Heart left ventricle (tissue), 16 donors: ENCODE measurements at regions of chr9 and their contacts with region 1.

Region 1: GRCh38 chr9:68822596-68823165 is 117.6 kb downstream of the PIP5K1B start:
- DNase-seq: peak in 4 of 5 donors; percentile 54 to 72 (median 68)
- ATAC-seq: peak; percentile 64 to 91 (median 90)
- H3K4me3 ChIP-seq: no peak overlapping the region
- H3K27ac ChIP-seq: peak overlapping the region in 9 of 12 donors; percentile 8 to 65 (median 29)
- H3K4me1 ChIP-seq: peaks cover 0 to 33% (median 11%) of the 10 kb centered on the region in 12 donors
- H3K27me3 ChIP-seq: no peaks in the 10 kb centered on the region
- CTCF ChIP-seq: no peak
- POLR2A ChIP-seq: no peak

Region 2: DNA sequence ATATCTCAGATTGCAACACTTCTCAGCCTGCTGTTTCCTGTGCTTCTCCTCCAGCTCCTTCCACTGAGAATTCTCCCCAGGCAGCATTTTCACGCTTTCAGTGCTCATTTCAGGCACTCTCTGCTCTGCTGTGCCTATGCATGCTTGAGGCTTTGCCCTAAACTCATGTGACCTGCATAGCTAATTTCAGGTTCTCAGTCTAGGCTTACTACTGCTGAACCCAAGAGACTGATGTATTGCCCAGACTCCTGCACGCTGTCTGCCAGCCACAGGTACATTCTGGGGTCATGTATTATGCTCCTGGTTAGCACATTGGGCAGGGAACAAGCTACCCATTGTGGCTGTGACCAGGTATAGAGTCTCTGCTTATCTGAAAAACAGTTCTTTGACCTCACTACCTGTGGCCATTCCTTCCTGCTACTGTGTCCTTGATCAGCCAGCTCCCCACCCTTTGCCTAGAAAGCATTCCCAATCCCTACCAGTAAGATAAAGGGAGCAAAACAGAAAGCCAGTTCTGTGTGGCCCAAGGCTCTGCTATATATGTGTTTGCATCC is 83.0 kb before region 1 on chr9:
- intact Hi-C with region 1: loop called in 1 of 10 experiments (anchors 10 kb)
- DNase-seq: no peak
- ATAC-seq: peak in 3 of 4 donors; percentile 14 to 41 (median 26)
- H3K4me3 ChIP-seq: no peak overlapping the region
- H3K27ac ChIP-seq: peak overlapping the region; percentile 43 to 80 (median 60)
- H3K4me1 ChIP-seq: peaks cover 0 to 57% (median 18%) of the 10 kb centered on the region in 12 donors
- H3K27me3 ChIP-seq: no peaks in the 10 kb centered on the region
- CTCF ChIP-seq: no peak
- POLR2A ChIP-seq: no peak

Region 3: GRCh38 chr9:68851657-68852056 is 29.0 kb after region 1 on chr9:
- intact Hi-C with region 1: loop called in 1 of 10 experiments (anchors 5 kb)
- DNase-seq: no peak
- ATAC-seq: peak in 3 of 4 donors; percentile 44 to 68 (median 65)
- H3K4me3 ChIP-seq: no peak overlapping the region
- H3K27ac ChIP-seq: no peak overlapping the region
- H3K4me1 ChIP-seq: peaks cover 0 to 15% (median 0%) of the 10 kb centered on the region in 12 donors
- H3K27me3 ChIP-seq: no peaks in the 10 kb centered on the region
- CTCF ChIP-seq: no peak
- POLR2A ChIP-seq: no peak